ENCODE measurements at regions of chr6 and their contacts with region 1.

Region 1: GRCh38 chr6:89940225-89941027 is 46.2 kb downstream of the GJA10 start:
- DNase-seq: peak; percentile 67
- H3K4me3 Mint-ChIP-seq: peak overlapping the region; percentile 12
- H3K27ac Mint-ChIP-seq: peak overlapping the region; percentile 27
- H3K4me1 Mint-ChIP-seq: peaks cover 12% of the 10 kb centered on the region
- H3K27me3 Mint-ChIP-seq: peaks cover 21% of the 10 kb centered on the region
- CTCF ChIP-seq: peak; percentile 61

Region 2: GRCh38 chr6:90179190-90180169 is 239.1 kb after region 1 on chr6:
- CTCF ChIA-PET with region 1: interaction called, 3 read pairs
- intact Hi-C with region 1: loop called (anchors 10 kb)
- DNase-seq: no peak
- H3K4me3 Mint-ChIP-seq: no peak overlapping the region
- H3K27ac Mint-ChIP-seq: no peak overlapping the region
- H3K4me1 Mint-ChIP-seq: peaks cover 25% of the 10 kb centered on the region
- H3K27me3 Mint-ChIP-seq: no peaks in the 10 kb centered on the region
- CTCF ChIP-seq: peak; percentile 45

Region 3: DNA sequence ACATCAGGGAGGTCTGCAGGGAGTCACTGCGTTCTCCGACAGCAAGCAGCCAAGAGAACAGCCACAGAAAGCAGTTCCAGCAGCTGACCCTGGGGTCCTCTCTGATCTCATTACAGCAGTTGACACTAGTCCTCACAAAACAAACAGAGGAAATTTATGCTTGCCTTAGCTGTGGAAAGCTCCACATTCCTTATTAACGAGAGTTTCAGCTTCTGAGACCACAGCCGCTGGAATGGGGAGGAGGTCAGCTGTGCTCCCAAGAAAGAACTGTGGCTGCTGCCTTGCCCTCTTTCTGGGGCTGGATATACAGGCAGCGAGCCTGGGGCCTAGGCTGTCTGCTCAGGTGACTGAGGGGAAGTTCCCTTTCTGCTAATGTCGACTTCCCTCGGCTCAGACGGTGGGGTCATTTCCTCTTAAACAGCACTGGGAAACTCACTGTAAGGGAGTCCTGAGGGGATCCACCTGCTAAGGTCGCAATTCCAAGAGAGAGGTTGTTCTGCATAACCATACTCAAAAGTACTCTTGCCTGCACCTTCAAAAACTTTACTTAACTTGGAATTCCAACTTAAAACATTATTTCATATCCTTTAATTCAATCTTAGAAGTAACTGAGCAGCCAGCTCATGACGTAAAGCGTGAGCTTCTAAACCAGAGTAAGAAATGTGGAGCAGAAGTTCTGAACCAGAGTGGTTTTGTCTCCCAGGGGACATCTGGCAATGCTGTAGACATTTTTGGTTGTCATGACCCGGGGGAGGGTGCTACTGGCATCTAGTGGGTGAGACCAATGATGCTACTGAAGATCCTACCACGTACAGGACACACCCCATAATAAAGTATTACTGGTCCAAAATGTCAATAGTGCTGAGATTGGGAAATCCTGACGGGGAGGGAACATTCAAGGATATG is 275.9 kb after region 1 on chr6:
- CTCF ChIA-PET with region 1: interaction called, 12 read pairs
- intact Hi-C with region 1: no loop called
- DNase-seq: no peak
- H3K4me3 Mint-ChIP-seq: no peak overlapping the region
- H3K27ac Mint-ChIP-seq: no peak overlapping the region
- H3K4me1 Mint-ChIP-seq: peaks cover 6% of the 10 kb centered on the region
- H3K27me3 Mint-ChIP-seq: no peaks in the 10 kb centered on the region
- CTCF ChIP-seq: no peak

Region 4: GRCh38 chr6:90431576-90431975 is 491.1 kb after region 1 on chr6:
- CTCF ChIA-PET with region 1: interaction called, 11 read pairs
- intact Hi-C with region 1: no loop called
- DNase-seq: no peak
- H3K4me3 Mint-ChIP-seq: no peak overlapping the region
- H3K27ac Mint-ChIP-seq: peak overlapping the region; percentile 5
- H3K4me1 Mint-ChIP-seq: peaks cover 16% of the 10 kb centered on the region
- H3K27me3 Mint-ChIP-seq: no peaks in the 10 kb centered on the region
- CTCF ChIP-seq: no peak

Region 5: GRCh38 chr6:90478789-90479602 is 538.6 kb after region 1 on chr6:
- CTCF ChIA-PET with region 1: interaction called, 68 read pairs
- intact Hi-C with region 1: loop called (anchors 1 kb)
- DNase-seq: peak; percentile 89
- H3K4me3 Mint-ChIP-seq: peak overlapping the region; percentile 15
- H3K27ac Mint-ChIP-seq: peak overlapping the region; percentile 70
- H3K4me1 Mint-ChIP-seq: peaks cover 17% of the 10 kb centered on the region
- H3K27me3 Mint-ChIP-seq: no peaks in the 10 kb centered on the region
- CTCF ChIP-seq: peak; percentile 75